CD4-positive, alpha-beta T cell (primary cell): ENCODE measurements at regions of chr2 and their contacts with region 1.

Region 1: GRCh38 chr2:61426267-61426897 is 44.5 kb downstream of the USP34 start:
- DNase-seq: peak; percentile 57 to 86 (median 69)
- ATAC-seq: peak; percentile 91
- H3K4me3 ChIP-seq: no peak overlapping the region
- H3K4me3 Mint-ChIP-seq: peak overlapping the region; percentile 44
- H3K27ac ChIP-seq: peak overlapping the region in 1 of 2 donors; percentile 72
- H3K27ac Mint-ChIP-seq: peak overlapping the region; percentile 96
- H3K4me1 ChIP-seq: peaks cover 38% of the 10 kb centered on the region
- H3K4me1 Mint-ChIP-seq: peaks cover 73% of the 10 kb centered on the region
- H3K27me3 ChIP-seq: no peaks in the 10 kb centered on the region
- H3K27me3 Mint-ChIP-seq: no peaks in the 10 kb centered on the region
- CTCF ChIP-seq: peak; percentile 81

Region 2: DNA sequence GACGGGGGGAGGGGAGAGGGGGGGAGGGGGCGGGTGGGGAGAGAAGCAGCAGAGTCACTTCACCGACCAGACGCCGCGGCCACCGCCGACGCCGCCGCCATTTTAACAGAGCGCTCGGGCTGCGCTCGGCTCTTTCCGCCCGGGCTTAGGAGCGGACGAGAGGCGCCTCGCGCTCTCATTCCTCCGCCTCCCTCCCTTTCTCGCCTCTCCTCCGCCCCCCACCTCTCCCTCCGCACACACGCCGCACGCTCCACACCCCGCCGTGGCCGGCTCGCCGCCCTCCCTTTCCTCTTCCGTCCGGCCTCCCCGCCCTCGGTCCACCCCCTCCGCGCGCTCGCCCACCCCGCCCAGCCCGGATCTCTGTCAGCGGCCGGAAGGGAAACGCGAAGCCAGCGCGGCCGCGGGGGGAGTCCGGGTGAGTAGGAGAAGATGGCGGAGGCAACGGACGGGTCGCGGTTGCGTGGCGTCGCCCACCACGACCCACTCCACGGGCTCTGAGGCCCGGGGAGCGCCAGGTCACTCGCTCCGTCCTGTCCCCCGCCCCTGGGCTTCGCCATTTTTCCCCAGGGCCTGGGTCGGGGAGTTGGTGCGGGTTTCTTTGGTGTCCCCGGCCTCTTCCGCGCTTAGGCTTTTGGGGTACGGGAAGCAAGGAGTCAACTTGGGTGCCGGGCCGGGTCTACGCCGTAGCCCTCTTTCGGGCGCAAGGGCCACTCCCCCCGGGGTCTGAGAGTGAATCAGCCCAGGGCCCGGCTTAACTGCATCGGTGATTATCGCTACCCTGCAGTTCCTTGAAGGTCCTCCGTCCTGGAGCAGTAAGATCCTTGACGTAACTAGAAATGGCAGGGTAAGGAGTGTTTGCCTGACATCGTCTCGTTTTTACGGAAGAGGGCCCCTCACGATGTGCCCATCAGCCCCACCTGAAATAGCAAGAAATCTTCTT is 44.9 kb after region 1 on chr2 and contains the start of gene USP34:
- CTCF ChIA-PET with region 1: interaction called, 8 read pairs
- POLR2A ChIA-PET with region 1: interaction called, 22 read pairs
- intact Hi-C with region 1: loop called (anchors 1 to 2 kb)
- DNase-seq: peak; percentile 83 to 98 (median 90)
- ATAC-seq: peak; percentile 86
- H3K4me3 ChIP-seq: peak within 1 kb of the TSS; percentile 99
- H3K4me3 Mint-ChIP-seq: peak within 1 kb of the TSS; percentile 99
- H3K27ac ChIP-seq: peak within 1 kb of the TSS; percentile 95 to 100
- H3K27ac Mint-ChIP-seq: peak within 1 kb of the TSS; percentile 95
- H3K4me1 ChIP-seq: peaks cover 38% of the 10 kb centered on the region
- H3K4me1 Mint-ChIP-seq: peaks cover 36% of the 10 kb centered on the region
- H3K27me3 ChIP-seq: no peaks in the 10 kb centered on the region
- H3K27me3 Mint-ChIP-seq: no peaks in the 10 kb centered on the region
- CTCF ChIP-seq: no peak
- total RNA-seq, gene USP34: 137 to 138 TPM

Region 3: DNA sequence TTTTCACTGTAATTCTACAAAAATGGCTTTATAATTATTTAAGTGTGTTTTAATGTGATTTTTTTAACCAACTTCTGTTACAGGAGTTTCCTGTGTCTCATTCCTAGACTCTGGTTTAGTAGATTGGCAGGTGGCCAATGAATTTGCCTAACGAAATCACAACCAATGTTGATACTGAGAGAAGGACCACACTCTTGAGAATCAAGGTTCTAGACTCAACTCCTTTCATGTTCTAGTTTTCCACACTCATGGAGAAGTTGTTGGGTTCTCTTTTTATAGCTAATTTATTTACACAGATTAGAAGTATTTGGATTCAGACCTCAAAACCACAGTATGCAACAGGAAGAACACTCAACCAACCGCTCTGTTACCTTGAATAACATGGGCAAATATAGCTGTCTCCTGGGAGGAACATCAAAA is 67.2 kb after region 1 on chr2:
- CTCF ChIA-PET with region 1: interaction called, 8 read pairs
- POLR2A ChIA-PET with region 1: interaction called, 8 read pairs
- intact Hi-C with region 1: loop called (anchors 5 kb)
- DNase-seq: peak in 4 of 14 experiments; percentile 21 to 43 (median 40)
- ATAC-seq: peak; percentile 71
- H3K4me3 ChIP-seq: no peak overlapping the region
- H3K4me3 Mint-ChIP-seq: peak overlapping the region; percentile 48
- H3K27ac ChIP-seq: peak overlapping the region; percentile 23 to 34
- H3K27ac Mint-ChIP-seq: peak overlapping the region; percentile 79
- H3K4me1 ChIP-seq: peaks cover 10% of the 10 kb centered on the region
- H3K4me1 Mint-ChIP-seq: peaks cover 32% of the 10 kb centered on the region
- H3K27me3 ChIP-seq: no peaks in the 10 kb centered on the region
- H3K27me3 Mint-ChIP-seq: no peaks in the 10 kb centered on the region
- CTCF ChIP-seq: no peak

Region 4: DNA sequence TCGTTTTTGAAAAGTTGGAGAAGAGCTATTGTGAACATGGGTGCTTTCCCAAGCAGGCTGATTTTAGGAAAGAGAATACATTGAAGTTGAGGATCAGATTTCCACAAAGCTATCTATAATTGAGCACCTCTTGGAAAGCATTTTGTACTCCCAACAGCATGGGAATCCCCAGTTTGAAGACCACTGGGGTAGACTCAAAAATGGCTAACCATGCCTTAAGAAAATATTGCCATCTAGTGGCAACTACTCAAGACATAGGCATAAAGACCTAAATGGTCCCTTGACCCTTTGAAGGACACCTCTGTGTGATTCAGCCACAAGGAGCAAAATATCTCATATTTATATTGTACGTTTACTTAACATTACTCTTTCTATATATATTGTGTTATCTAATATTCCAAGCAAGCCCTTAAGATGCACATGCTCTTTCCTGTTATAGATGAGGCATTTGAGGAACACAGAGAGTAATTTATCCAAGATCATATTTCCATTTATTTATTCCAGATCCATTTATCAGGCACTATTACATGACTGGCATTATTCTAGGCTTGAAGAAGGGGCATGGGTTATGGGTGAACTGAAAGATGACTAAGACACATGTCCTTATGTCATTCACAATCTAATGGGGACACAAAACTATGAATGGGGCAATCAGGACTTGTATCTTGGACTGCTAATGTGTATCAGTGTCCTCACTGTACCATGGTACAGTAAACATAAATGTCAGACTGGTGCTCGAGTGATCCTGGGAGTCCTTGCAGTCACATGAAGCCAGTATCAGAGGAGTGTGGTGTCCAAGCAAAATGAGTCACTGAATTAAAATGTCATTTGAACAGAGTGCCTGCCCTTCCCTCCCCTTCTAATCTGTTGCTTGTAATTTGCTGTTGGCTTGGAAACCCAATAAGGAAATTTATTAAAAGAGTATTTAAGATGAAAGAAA is 232.7 kb after region 1 on chr2:
- CTCF ChIA-PET with region 1: interaction called, 3 read pairs
- POLR2A ChIA-PET with region 1: no interaction called
- intact Hi-C with region 1: loop called in 1 of 2 experiments (anchors 1 kb)
- DNase-seq: peak in 3 of 14 experiments; percentile 19 to 29 (median 25)
- ATAC-seq: no peak
- H3K4me3 ChIP-seq: no peak overlapping the region
- H3K4me3 Mint-ChIP-seq: no peak overlapping the region
- H3K27ac ChIP-seq: no peak overlapping the region
- H3K27ac Mint-ChIP-seq: no peak overlapping the region
- H3K4me1 ChIP-seq: no peaks in the 10 kb centered on the region
- H3K4me1 Mint-ChIP-seq: no peaks in the 10 kb centered on the region
- H3K27me3 ChIP-seq: no peaks in the 10 kb centered on the region
- H3K27me3 Mint-ChIP-seq: no peaks in the 10 kb centered on the region
- CTCF ChIP-seq: peak; percentile 52